ENCODE measurements at regions of chr18 and their contacts with region 1.

Region 1: DNA sequence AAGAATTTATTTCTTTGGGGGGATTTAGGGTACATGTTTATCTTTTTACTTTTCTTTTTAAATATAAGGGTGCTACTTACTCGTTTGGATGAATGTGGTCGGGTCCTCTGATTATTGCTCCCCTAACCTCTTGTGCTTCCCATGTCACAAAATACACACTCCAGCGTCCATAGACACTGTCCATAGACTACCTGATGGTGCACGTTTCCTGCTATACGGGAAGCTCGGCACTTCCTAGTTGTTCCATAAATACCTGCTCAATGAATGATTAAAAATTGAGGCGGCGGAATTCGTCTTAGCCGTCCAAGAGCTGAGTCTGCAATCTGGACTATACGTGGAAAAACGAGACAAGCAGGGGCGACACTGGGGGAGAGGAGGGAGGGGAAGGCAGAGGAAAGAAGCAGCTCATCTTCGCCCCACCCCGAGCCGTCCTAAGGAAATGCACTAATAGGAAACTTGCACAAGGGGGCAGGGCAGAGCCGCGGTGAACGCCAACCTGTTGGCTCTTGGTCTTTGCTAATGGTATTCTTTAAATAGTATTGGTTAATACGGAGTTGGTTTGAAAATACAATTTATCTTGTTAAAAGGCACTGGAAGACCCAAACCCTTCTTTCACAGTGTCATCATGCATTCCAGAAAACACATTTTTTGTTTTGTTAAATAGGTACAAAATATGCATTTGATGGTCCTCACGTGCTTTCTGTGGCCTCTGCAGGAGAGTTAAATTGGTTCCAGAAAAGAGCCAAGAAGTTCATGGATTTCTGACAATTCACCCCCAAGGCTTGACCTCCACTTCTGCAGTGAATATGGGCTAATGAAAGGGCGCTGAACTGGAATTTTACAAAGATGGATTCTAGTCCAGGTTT is 73.0 kb upstream of the KCTD1 start:
- DNase-seq: peak; percentile 39 to 62 (median 54)
- ATAC-seq: peak; percentile 86
- H3K4me3 ChIP-seq: no peak overlapping the region
- H3K27ac ChIP-seq: no peak overlapping the region
- H3K4me1 ChIP-seq: no peaks in the 10 kb centered on the region
- H3K27me3 ChIP-seq: no peaks in the 10 kb centered on the region
- CTCF ChIP-seq: peak; percentile 52 to 75 (median 68)
- POLR2A ChIP-seq: no peak

Region 2: GRCh38 chr18:26764628-26765027 is 143.2 kb after region 1 on chr18:
- intact Hi-C with region 1: loop called (anchors 5 kb)
- DNase-seq: no peak
- ATAC-seq: no peak
- H3K4me3 ChIP-seq: no peak overlapping the region
- H3K27ac ChIP-seq: no peak overlapping the region
- H3K4me1 ChIP-seq: peaks cover 5% of the 10 kb centered on the region
- H3K27me3 ChIP-seq: no peaks in the 10 kb centered on the region
- CTCF ChIP-seq: no peak
- POLR2A ChIP-seq: no peak

Measured in body of pancreas (tissue), 4 donors.